CD4-positive, alpha-beta T cell (primary cell): ENCODE measurements at regions of chr5 and their contacts with region 1.

Region 1: GRCh38 chr5:170278611-170279452 is 18.7 kb downstream of the LCP2 start:
- DNase-seq: peak; percentile 76 to 95 (median 84)
- ATAC-seq: peak; percentile 67
- H3K4me3 ChIP-seq: peak overlapping the region; percentile 28
- H3K4me3 Mint-ChIP-seq: peak overlapping the region; percentile 85
- H3K27ac ChIP-seq: peak overlapping the region; percentile 63 to 92
- H3K27ac Mint-ChIP-seq: peak overlapping the region; percentile 96
- H3K4me1 ChIP-seq: peaks cover 98% of the 10 kb centered on the region
- H3K4me1 Mint-ChIP-seq: peaks cover 92% of the 10 kb centered on the region
- H3K27me3 ChIP-seq: no peaks in the 10 kb centered on the region
- H3K27me3 Mint-ChIP-seq: no peaks in the 10 kb centered on the region
- CTCF ChIP-seq: no peak

Region 2: DNA sequence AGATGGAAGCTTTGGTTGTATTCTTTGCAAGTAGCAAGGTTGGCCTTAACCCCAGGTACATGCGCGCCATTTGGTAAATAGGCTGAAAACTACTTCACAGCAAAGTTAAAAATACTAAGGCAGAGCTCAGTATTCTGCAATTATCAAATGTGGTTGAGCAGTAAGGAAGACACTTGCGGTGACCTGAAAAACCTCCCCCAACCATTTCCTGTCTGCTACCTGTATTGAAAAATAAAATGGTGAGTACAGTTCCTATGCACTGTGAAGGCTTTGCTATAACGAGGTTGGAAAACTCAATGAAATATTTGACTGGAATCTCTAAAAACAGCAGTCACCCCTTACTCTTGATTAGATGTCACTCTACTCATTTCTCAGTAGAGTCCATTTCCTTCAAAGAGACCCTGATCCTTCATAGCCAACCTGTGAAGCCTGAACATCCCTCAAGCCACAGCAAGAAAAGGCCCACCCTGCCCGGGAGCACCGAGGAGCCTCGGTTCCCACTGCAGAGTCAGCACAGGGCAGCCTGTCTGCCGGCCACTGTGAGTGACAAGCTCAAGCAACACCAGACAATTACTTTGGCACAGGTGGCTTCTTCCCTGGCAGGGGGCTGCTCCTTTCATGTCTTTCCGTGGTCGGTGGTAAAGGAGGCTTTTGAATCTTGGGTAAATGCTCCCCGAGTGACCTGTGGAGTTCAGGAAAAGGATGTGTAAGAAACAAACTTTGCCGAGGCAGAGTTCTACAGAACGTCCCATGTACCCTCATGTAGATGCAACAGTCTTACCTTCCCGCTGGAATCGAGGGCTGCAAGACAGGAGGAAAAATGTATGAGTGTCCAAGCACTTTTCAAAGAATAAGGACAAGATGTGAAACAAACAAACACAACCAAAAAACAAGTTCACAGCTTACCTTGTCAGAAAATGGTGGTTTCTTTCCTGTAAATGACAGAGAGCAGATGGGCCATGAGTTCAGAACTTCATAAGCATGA is 16.5 kb before region 1 on chr5:
- CTCF ChIA-PET with region 1: interaction called, 13 read pairs
- POLR2A ChIA-PET with region 1: interaction called, 66 read pairs
- intact Hi-C with region 1: loop called in 1 of 2 experiments (anchors 1 kb)
- DNase-seq: peak in 9 of 14 experiments; percentile 40 to 88 (median 61)
- ATAC-seq: peak; percentile 88
- H3K4me3 ChIP-seq: peak overlapping the region; percentile 11
- H3K4me3 Mint-ChIP-seq: peak overlapping the region; percentile 52
- H3K27ac ChIP-seq: peak overlapping the region; percentile 62 to 88
- H3K27ac Mint-ChIP-seq: peak overlapping the region; percentile 96
- H3K4me1 ChIP-seq: peaks cover 63% of the 10 kb centered on the region
- H3K4me1 Mint-ChIP-seq: peaks cover 91% of the 10 kb centered on the region
- H3K27me3 ChIP-seq: no peaks in the 10 kb centered on the region
- H3K27me3 Mint-ChIP-seq: no peaks in the 10 kb centered on the region
- CTCF ChIP-seq: no peak

Region 3: GRCh38 chr5:170267431-170268152 is 11.2 kb before region 1 on chr5:
- CTCF ChIA-PET with region 1: interaction called, 13 read pairs
- POLR2A ChIA-PET with region 1: interaction called, 426 read pairs
- intact Hi-C with region 1: loop called in 1 of 2 experiments (anchors 1 kb)
- DNase-seq: peak; percentile 71 to 93 (median 78)
- ATAC-seq: peak; percentile 75
- H3K4me3 ChIP-seq: peak overlapping the region; percentile 8
- H3K4me3 Mint-ChIP-seq: peak overlapping the region; percentile 70
- H3K27ac ChIP-seq: peak overlapping the region; percentile 77 to 82
- H3K27ac Mint-ChIP-seq: peak overlapping the region; percentile 96
- H3K4me1 ChIP-seq: peaks cover 84% of the 10 kb centered on the region
- H3K4me1 Mint-ChIP-seq: peaks cover 93% of the 10 kb centered on the region
- H3K27me3 ChIP-seq: no peaks in the 10 kb centered on the region
- H3K27me3 Mint-ChIP-seq: no peaks in the 10 kb centered on the region
- CTCF ChIP-seq: peak; percentile 91

Region 4: GRCh38 chr5:170293273-170293672 is 14.4 kb after region 1 on chr5:
- CTCF ChIA-PET with region 1: interaction called, 31 read pairs
- POLR2A ChIA-PET with region 1: interaction called, 426 read pairs
- intact Hi-C with region 1: loop called (anchors 1 to 2 kb)
- DNase-seq: peak in 5 of 14 experiments; percentile 39 to 83 (median 74)
- ATAC-seq: peak; percentile 10
- H3K4me3 ChIP-seq: peak overlapping the region; percentile 66
- H3K4me3 Mint-ChIP-seq: peak overlapping the region; percentile 98
- H3K27ac ChIP-seq: peak overlapping the region; percentile 49 to 98
- H3K27ac Mint-ChIP-seq: peak overlapping the region; percentile 96
- H3K4me1 ChIP-seq: peaks cover 66% of the 10 kb centered on the region
- H3K4me1 Mint-ChIP-seq: peaks cover 82% of the 10 kb centered on the region
- H3K27me3 ChIP-seq: no peaks in the 10 kb centered on the region
- H3K27me3 Mint-ChIP-seq: no peaks in the 10 kb centered on the region
- CTCF ChIP-seq: no peak

Region 5: GRCh38 chr5:170302653-170303501 is 24.0 kb after region 1 on chr5:
- CTCF ChIA-PET with region 1: interaction called, 22 read pairs
- POLR2A ChIA-PET with region 1: interaction called, 426 read pairs
- intact Hi-C with region 1: no loop called
- DNase-seq: peak; percentile 36 to 96 (median 58)
- ATAC-seq: peak; percentile 95
- H3K4me3 ChIP-seq: peak overlapping the region; percentile 47
- H3K4me3 Mint-ChIP-seq: peak overlapping the region; percentile 87
- H3K27ac ChIP-seq: peak overlapping the region; percentile 88 to 92
- H3K27ac Mint-ChIP-seq: peak overlapping the region; percentile 96
- H3K4me1 ChIP-seq: peaks cover 82% of the 10 kb centered on the region
- H3K4me1 Mint-ChIP-seq: peaks cover 87% of the 10 kb centered on the region
- H3K27me3 ChIP-seq: no peaks in the 10 kb centered on the region
- H3K27me3 Mint-ChIP-seq: no peaks in the 10 kb centered on the region
- CTCF ChIP-seq: peak; percentile 27

Region 6: DNA sequence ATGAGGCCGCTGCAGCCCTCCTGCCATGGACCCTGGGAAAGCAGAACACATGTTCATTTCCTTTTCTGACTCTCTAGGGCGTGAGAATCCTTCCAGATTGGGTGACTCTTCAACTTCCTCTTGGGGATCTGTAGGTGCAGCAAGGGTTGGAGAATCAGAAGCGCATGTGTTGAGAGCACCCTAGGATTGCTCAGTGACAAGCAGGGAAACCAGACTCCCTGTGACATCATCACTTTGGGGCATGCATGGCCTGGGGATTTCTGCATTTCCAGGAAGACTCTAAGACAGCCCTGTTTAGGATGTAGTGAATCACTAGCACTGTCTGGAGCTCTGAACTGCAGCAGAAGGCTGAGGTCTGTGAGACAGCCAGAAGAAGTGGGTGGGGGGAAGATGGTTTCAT is 33.8 kb after region 1 on chr5:
- CTCF ChIA-PET with region 1: interaction called, 9 read pairs
- POLR2A ChIA-PET with region 1: interaction called, 27 read pairs
- intact Hi-C with region 1: loop called in 1 of 2 experiments (anchors 1 kb)
- DNase-seq: peak in 8 of 14 experiments; percentile 44 to 92 (median 61)
- ATAC-seq: peak; percentile 87
- H3K4me3 ChIP-seq: peak overlapping the region; percentile 6
- H3K4me3 Mint-ChIP-seq: peak overlapping the region; percentile 71
- H3K27ac ChIP-seq: peak overlapping the region; percentile 80 to 83
- H3K27ac Mint-ChIP-seq: peak overlapping the region; percentile 91
- H3K4me1 ChIP-seq: peaks cover 56% of the 10 kb centered on the region
- H3K4me1 Mint-ChIP-seq: peaks cover 87% of the 10 kb centered on the region
- H3K27me3 ChIP-seq: no peaks in the 10 kb centered on the region
- H3K27me3 Mint-ChIP-seq: no peaks in the 10 kb centered on the region
- CTCF ChIP-seq: no peak

Region 7: GRCh38 chr5:170420780-170421412 is 142.1 kb after region 1 on chr5:
- CTCF ChIA-PET with region 1: interaction called, 5 read pairs
- POLR2A ChIA-PET with region 1: interaction called, 5 read pairs
- intact Hi-C with region 1: loop called in 1 of 2 experiments (anchors 1 kb)
- DNase-seq: peak in 13 of 14 experiments; percentile 11 to 81 (median 39)
- ATAC-seq: peak; percentile 55
- H3K4me3 ChIP-seq: no peak overlapping the region
- H3K4me3 Mint-ChIP-seq: no peak overlapping the region
- H3K27ac ChIP-seq: no peak overlapping the region
- H3K27ac Mint-ChIP-seq: no peak overlapping the region
- H3K4me1 ChIP-seq: peaks cover 18% of the 10 kb centered on the region
- H3K4me1 Mint-ChIP-seq: peaks cover 21% of the 10 kb centered on the region
- H3K27me3 ChIP-seq: no peaks in the 10 kb centered on the region
- H3K27me3 Mint-ChIP-seq: no peaks in the 10 kb centered on the region
- CTCF ChIP-seq: peak; percentile 81